Heart right ventricle (tissue), 16 donors: ENCODE measurements at regions of chr1 and their contacts with region 1.

Region 1: GRCh38 chr1:212477014-212477679 is 44.4 kb downstream of the NENF start:
- DNase-seq: peak; percentile 70 to 86
- ATAC-seq: peak; percentile 91 to 96 (median 94)
- H3K4me3 ChIP-seq: no peak overlapping the region
- H3K27ac ChIP-seq: no peak overlapping the region
- H3K4me1 ChIP-seq: peaks cover 0 to 7% (median 0%) of the 10 kb centered on the region in 9 donors
- H3K27me3 ChIP-seq: peaks cover 0 to 9% (median 0%) of the 10 kb centered on the region in 7 donors
- CTCF ChIP-seq: peak; percentile 80 to 97 (median 92)

Region 2: GRCh38 chr1:212566522-212567479 is 89.7 kb after region 1 on chr1:
- intact Hi-C with region 1: loop called in 2 of 10 experiments (anchors 10 kb)
- DNase-seq: peak in 1 of 2 donors; percentile 39
- ATAC-seq: peak; percentile 72 to 93 (median 86)
- H3K4me3 ChIP-seq: peak overlapping the region; percentile 5 to 64 (median 53)
- H3K27ac ChIP-seq: peak overlapping the region; percentile 5 to 89 (median 80)
- H3K4me1 ChIP-seq: peaks cover 0 to 19% (median 13%) of the 10 kb centered on the region in 9 donors
- H3K27me3 ChIP-seq: no peaks in the 10 kb centered on the region
- CTCF ChIP-seq: peak in 3 of 9 donors; percentile 6 to 10 (median 8)

Region 3: GRCh38 chr1:212621951-212622305 is 144.8 kb after region 1 on chr1:
- intact Hi-C with region 1: loop called in 3 of 10 experiments (anchors 5 to 10 kb)
- DNase-seq: no peak
- ATAC-seq: peak in 1 of 8 donors; percentile 34
- H3K4me3 ChIP-seq: no peak overlapping the region
- H3K27ac ChIP-seq: peak overlapping the region in 1 of 10 donors; percentile 6
- H3K4me1 ChIP-seq: peaks cover 0 to 4% (median 0%) of the 10 kb centered on the region in 9 donors
- H3K27me3 ChIP-seq: no peaks in the 10 kb centered on the region
- CTCF ChIP-seq: no peak

Region 4: GRCh38 chr1:212665241-212666115 is 188.3 kb after region 1 on chr1:
- intact Hi-C with region 1: loop called in 1 of 10 experiments (anchors 5 kb)
- DNase-seq: peak; percentile 85 to 87
- ATAC-seq: peak; percentile 94 to 99 (median 96)
- H3K4me3 ChIP-seq: peak overlapping the region; percentile 33 to 71 (median 64)
- H3K27ac ChIP-seq: peak overlapping the region in 9 of 10 donors; percentile 79 to 93 (median 81)
- H3K4me1 ChIP-seq: peaks cover 0 to 58% (median 31%) of the 10 kb centered on the region in 9 donors
- H3K27me3 ChIP-seq: no peaks in the 10 kb centered on the region
- CTCF ChIP-seq: peak; percentile 90 to 99 (median 96)

Region 5: DNA sequence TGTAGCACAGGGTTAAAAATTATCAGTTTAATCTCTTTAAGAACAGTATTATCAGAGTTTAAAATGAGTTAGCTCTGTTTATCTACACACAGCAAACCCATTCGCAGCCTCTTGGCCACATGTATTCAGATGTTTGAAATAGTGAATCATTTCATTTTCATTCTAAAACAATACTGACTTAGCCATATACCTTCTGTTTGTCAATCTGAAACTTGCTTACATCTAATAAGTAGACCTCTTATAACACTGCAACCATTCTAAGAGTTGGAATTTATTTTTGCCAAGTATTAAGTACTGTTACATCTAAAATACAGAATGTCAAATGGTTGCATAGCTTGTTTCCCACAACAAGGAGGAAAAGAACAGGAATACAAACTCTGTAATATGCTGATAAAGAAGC is 513.1 kb after region 1 on chr1:
- intact Hi-C with region 1: loop called in 2 of 10 experiments (anchors 10 kb)
- DNase-seq: no peak
- ATAC-seq: no peak
- H3K4me3 ChIP-seq: no peak overlapping the region
- H3K27ac ChIP-seq: no peak overlapping the region
- H3K4me1 ChIP-seq: peaks cover 0 to 8% (median 0%) of the 10 kb centered on the region in 9 donors
- H3K27me3 ChIP-seq: no peaks in the 10 kb centered on the region
- CTCF ChIP-seq: no peak